Activated T-helper 1 cell treated with anti-CD3 and anti-CD28 coated beads, Interleukin-12 subunit alpha, Interleukin-12 subunit beta, Interleukin-2, Interleukin-4 antibody, amounts not matched to agents 30 ng/mL and 10 ng/mL and 1 ng/mL, durations not matched to agents 14 hours and 24 hours and 36 hours (primary cell): ENCODE measurements at regions of chr2 and their contacts with region 1.

Region 1: DNA sequence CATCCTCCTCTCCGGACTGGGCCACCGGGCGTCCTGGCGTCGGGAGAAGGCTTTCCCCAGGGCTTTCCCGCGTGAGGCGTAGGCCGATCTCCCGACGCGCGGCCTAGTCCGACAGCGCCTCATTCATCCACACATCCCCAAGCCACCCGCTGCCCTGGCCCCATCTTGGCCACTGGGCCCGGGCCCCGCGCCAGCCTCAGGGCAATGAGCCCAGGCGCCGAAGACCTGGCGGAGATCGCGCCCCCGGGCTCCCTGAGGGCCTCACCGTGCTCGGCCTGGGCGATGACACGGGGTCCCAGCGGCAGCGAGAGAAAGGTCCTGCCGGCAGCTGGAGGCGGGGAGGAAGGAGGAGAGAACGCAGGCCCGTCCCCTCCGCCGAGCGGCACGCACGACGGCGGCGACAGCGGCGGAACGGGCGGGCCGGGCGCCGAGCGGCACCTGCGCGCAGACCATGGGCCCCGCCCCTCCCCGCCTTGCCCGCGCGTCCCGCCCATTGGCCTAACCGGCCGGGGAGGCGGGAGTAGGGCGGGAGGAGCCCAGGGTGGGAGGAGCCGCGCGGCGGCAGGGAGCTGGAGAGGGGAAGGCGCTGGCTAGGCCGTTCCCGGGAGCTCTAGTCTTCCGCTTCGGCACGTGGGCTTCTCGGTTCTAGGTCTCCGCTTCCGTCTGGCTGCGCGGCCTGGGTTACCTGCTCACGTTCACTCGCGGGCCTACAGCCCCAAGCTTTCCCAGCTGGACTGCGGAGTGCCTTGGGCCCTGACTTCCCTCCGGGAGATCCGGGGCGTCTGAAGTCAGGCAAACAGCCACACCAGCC is at the start of gene OLA1:
- DNase-seq: peak; percentile 95
- H3K4me3 Mint-ChIP-seq: peak within 1 kb of the TSS; percentile 83
- H3K27ac Mint-ChIP-seq: peak within 1 kb of the TSS; percentile 79
- H3K4me1 Mint-ChIP-seq: peaks cover 26% of the 10 kb centered on the region
- H3K27me3 Mint-ChIP-seq: no peaks in the 10 kb centered on the region
- total RNA-seq, gene OLA1: 132 and 139 TPM in 2 replicates

Region 2: DNA sequence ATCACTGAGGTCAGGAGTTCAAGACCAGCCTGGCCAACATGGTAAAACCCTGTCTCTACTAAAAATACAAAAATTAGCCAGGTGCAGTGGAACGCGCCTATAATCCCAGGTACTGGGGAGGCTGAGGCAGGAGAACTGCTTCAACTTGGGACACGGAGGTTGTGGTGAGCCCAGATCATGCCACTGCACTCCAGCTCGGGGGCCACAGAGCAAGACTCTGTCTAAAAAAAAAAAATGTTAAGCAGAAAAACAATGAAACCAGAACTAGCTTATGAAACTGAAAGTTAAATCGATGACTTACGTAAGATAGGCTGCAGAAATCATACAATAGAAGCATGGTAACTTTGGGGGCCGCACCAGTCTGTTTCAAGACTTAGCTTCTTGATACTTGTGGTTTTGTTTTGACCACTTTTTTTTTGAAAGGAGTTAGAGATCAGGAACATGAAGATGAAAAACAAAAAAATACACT is 244.6 kb after region 1 on chr2:
- intact Hi-C with region 1: loop called (anchors 1 kb)
- DNase-seq: peak; percentile 58
- H3K4me3 Mint-ChIP-seq: peak overlapping the region; percentile 76
- H3K27ac Mint-ChIP-seq: peak overlapping the region; percentile 92
- H3K4me1 Mint-ChIP-seq: peaks cover 76% of the 10 kb centered on the region
- H3K27me3 Mint-ChIP-seq: no peaks in the 10 kb centered on the region

Region 3: GRCh38 chr2:176001916-176002687 is 1753.7 kb after region 1 on chr2 and contains the start of gene LNPK:
- intact Hi-C with region 1: loop called (anchors 5 kb)
- DNase-seq: peak; percentile 91
- H3K4me3 Mint-ChIP-seq: peak within 1 kb of the TSS; percentile 95
- H3K27ac Mint-ChIP-seq: peak within 1 kb of the TSS; percentile 91
- H3K4me1 Mint-ChIP-seq: peaks cover 25% of the 10 kb centered on the region
- H3K27me3 Mint-ChIP-seq: peaks cover 5% of the 10 kb centered on the region
- total RNA-seq, gene LNPK: 35.2 and 43.6 TPM in 2 replicates